ENCODE measurements at regions of chr3 and their contacts with region 1.

Region 1: GRCh38 chr3:128095222-128095703 is 28.3 kb downstream of the RUVBL1 start:
- DNase-seq: peak; percentile 80
- ATAC-seq: peak; percentile 83
- H3K4me3 Mint-ChIP-seq: peak overlapping the region; percentile 19; the same call in 1 of the 2 replicates
- H3K27ac Mint-ChIP-seq: peak overlapping the region; percentile 79
- H3K4me1 Mint-ChIP-seq: peaks cover 61% of the 10 kb centered on the region
- H3K27me3 Mint-ChIP-seq: no peaks in the 10 kb centered on the region
- CTCF ChIP-seq: peak; percentile 41; the same call in 1 of the 2 replicates

Region 2: GRCh38 chr3:127612966-127613365 is 482.3 kb before region 1 on chr3:
- CTCF ChIA-PET with region 1: no interaction called
- POLR2A ChIA-PET with region 1: no interaction called
- DNase-seq: no peak
- ATAC-seq: no peak
- H3K4me3 Mint-ChIP-seq: no peak overlapping the region
- H3K27ac Mint-ChIP-seq: no peak overlapping the region
- H3K4me1 Mint-ChIP-seq: no peaks in the 10 kb centered on the region
- H3K27me3 Mint-ChIP-seq: no peaks in the 10 kb centered on the region
- CTCF ChIP-seq: no peak

Region 3: DNA sequence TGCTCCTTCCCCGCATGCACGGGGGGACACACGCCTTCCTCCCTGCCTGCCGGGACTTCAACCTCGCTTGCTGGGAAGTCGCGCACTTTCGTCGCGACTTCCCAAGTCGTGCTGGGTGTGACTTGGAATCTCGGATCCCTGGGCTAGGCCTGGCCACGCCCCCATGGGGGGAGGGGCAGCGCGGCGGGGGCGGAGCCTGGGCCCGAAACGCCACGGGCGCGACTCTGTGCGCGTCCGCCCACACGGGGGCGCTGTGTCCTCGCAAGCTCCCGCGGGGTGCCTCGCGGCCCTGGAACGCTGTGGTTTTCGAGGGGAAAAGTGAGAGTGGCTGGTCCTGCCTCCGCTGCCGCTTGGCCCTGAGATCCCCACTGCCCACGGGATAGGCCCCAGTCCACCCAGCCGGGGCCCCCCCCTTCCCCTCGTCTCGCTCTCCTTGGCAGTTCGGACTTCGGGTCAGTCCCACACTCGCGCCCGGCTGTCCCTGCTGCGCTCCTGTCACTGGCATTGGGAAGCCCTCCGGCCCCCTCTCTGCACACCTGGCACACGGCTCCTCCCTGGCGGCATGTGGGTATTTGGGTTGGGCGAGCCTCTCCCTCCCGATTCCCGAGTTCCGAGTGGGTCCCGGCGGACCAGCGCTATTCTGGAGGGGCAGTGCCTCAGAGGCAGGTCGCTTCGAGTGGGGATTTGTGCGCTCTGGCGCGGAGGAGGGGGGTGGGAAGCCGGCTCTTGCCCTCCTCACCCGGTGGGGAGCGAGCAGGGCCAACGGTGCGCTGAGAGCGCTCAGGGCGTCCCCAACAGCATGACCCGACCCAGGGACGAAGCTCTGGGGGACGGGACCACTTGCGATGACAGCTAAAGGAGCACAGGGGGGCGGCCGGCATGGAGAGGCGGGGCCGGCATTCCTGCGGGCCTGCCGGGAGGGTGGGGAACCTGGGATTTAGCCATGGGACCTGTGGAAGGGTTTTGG is 19.5 kb before region 1 on chr3:
- CTCF ChIA-PET with region 1: interaction called, 34 read pairs
- POLR2A ChIA-PET with region 1: no interaction called
- DNase-seq: peak; percentile 91
- ATAC-seq: peak; percentile 79
- H3K4me3 Mint-ChIP-seq: peak overlapping the region; percentile 77
- H3K27ac Mint-ChIP-seq: peak overlapping the region; percentile 91
- H3K4me1 Mint-ChIP-seq: peaks cover 12% of the 10 kb centered on the region
- H3K27me3 Mint-ChIP-seq: no peaks in the 10 kb centered on the region; the same call in 1 of the 2 replicates
- CTCF ChIP-seq: peak; percentile 94

Region 4: DNA sequence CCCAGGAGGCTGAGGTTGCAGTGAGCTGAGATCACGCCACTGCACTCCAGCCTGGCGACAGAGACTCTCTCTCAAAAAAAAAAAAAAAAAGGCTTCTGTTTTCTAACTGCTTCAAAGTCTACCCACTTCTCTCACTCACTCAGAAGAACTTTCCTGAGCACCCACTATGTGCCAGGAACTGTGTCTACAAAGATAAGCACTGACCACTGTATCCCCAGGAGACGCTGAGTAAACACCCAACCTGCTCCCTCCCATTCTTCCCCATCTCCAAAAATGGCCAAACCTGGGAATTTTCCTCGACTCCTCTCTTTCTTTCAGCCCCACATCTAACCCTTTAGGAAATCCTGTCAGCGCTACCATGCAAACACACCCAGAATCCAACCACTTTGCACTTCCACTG is 15.9 kb after region 1 on chr3:
- CTCF ChIA-PET with region 1: interaction called, 10 read pairs
- POLR2A ChIA-PET with region 1: no interaction called
- DNase-seq: no peak
- ATAC-seq: no peak
- H3K4me3 Mint-ChIP-seq: no peak overlapping the region
- H3K27ac Mint-ChIP-seq: no peak overlapping the region
- H3K4me1 Mint-ChIP-seq: peaks cover 8% of the 10 kb centered on the region
- H3K27me3 Mint-ChIP-seq: no peaks in the 10 kb centered on the region
- CTCF ChIP-seq: no peak

Region 5: GRCh38 chr3:128123538-128124368 is 28.5 kb after region 1 on chr3 and contains the start of gene RUVBL1:
- CTCF ChIA-PET with region 1: interaction called, 14 read pairs
- POLR2A ChIA-PET with region 1: no interaction called
- DNase-seq: peak; percentile 98
- ATAC-seq: peak; percentile 99
- H3K4me3 Mint-ChIP-seq: peak within 1 kb of the TSS; percentile 97
- H3K27ac Mint-ChIP-seq: peak within 1 kb of the TSS; percentile 95
- H3K4me1 Mint-ChIP-seq: peaks cover 15% of the 10 kb centered on the region
- H3K27me3 Mint-ChIP-seq: peaks cover 11% of the 10 kb centered on the region
- CTCF ChIP-seq: no peak
- total RNA-seq, gene RUVBL1: 116 to 121 TPM (median 118 TPM) in 3 replicates

Region 6: GRCh38 chr3:128133273-128134084 is 38.2 kb after region 1 on chr3:
- CTCF ChIA-PET with region 1: interaction called, 36 read pairs
- POLR2A ChIA-PET with region 1: no interaction called
- DNase-seq: peak; percentile 72
- ATAC-seq: peak; percentile 97
- H3K4me3 Mint-ChIP-seq: no peak overlapping the region
- H3K27ac Mint-ChIP-seq: peak overlapping the region; percentile 10; the same call in 1 of the 2 replicates
- H3K4me1 Mint-ChIP-seq: no peaks in the 10 kb centered on the region
- H3K27me3 Mint-ChIP-seq: peaks cover 17% of the 10 kb centered on the region
- CTCF ChIP-seq: peak; percentile 34; the same call in 1 of the 2 replicates